CD4-positive, alpha-beta T cell (primary cell): ENCODE measurements at regions of chr16 and their contacts with region 1.

Region 1: GRCh38 chr16:88914750-88915368 is 48.4 kb upstream of the PABPN1L start:
- DNase-seq: no peak
- ATAC-seq: no peak
- H3K4me3 ChIP-seq: no peak overlapping the region
- H3K4me3 Mint-ChIP-seq: no peak overlapping the region
- H3K27ac ChIP-seq: no peak overlapping the region
- H3K27ac Mint-ChIP-seq: no peak overlapping the region
- H3K4me1 ChIP-seq: no peaks in the 10 kb centered on the region
- H3K4me1 Mint-ChIP-seq: no peaks in the 10 kb centered on the region
- H3K27me3 ChIP-seq: no peaks in the 10 kb centered on the region
- H3K27me3 Mint-ChIP-seq: peaks cover 5% of the 10 kb centered on the region
- CTCF ChIP-seq: no peak

Region 2: DNA sequence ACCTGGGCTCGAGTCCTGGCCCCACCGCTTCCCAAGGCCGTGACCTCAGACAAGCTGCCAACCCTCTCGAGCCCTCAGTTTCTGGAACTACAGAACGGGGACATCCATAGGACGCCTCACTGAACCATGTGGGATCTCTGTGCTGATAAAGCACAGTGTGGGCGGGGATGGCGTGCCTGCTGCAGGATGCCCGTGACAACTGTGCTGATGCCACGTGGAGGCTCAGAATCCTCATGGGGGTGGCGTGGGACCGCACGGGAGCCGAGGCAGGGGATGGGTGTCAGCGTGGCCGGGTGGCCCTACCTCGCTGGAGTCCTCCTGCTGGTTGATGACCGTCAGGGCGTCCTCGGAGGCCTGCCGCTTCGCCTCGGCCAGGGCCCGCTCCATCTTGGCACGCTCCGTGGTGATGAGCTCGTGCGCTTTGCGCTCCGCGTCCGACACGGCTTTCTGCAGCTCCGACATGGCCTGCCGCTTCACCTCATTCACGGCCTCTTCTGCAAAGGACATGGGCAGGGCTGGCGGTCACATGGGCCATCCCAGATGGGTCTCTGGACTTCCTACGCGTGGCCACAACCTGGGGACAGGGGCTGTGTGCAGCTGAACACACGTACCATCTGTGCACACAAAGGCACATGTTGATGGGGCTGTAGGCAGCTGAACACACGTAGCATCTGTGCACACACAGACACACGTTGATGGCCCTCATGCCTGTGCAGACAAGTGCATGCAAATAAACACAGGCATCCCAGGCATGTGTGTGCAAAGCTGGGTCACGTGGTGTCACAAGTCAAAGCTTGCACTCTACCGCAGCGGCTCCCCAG is 35.7 kb before region 1 on chr16:
- CTCF ChIA-PET with region 1: no interaction called
- POLR2A ChIA-PET with region 1: no interaction called
- intact Hi-C with region 1: loop called in 1 of 2 experiments (anchors 5 kb)
- DNase-seq: no peak
- ATAC-seq: no peak
- H3K4me3 ChIP-seq: no peak overlapping the region
- H3K4me3 Mint-ChIP-seq: no peak overlapping the region
- H3K27ac ChIP-seq: no peak overlapping the region
- H3K27ac Mint-ChIP-seq: no peak overlapping the region
- H3K4me1 ChIP-seq: peaks cover 9% of the 10 kb centered on the region
- H3K4me1 Mint-ChIP-seq: no peaks in the 10 kb centered on the region
- H3K27me3 ChIP-seq: no peaks in the 10 kb centered on the region
- H3K27me3 Mint-ChIP-seq: no peaks in the 10 kb centered on the region
- CTCF ChIP-seq: no peak

Region 3: GRCh38 chr16:88925101-88925887 is 10.4 kb after region 1 on chr16:
- CTCF ChIA-PET with region 1: no interaction called
- POLR2A ChIA-PET with region 1: no interaction called
- intact Hi-C with region 1: no loop called
- DNase-seq: peak in 4 of 14 experiments; percentile 17 to 50 (median 26)
- ATAC-seq: peak; percentile 65
- H3K4me3 ChIP-seq: no peak overlapping the region
- H3K4me3 Mint-ChIP-seq: no peak overlapping the region
- H3K27ac ChIP-seq: no peak overlapping the region
- H3K27ac Mint-ChIP-seq: no peak overlapping the region
- H3K4me1 ChIP-seq: peaks cover 10% of the 10 kb centered on the region
- H3K4me1 Mint-ChIP-seq: peaks cover 6% of the 10 kb centered on the region
- H3K27me3 ChIP-seq: peaks cover 0 to 3% of the 10 kb centered on the region in 2 experiments
- H3K27me3 Mint-ChIP-seq: no peaks in the 10 kb centered on the region
- CTCF ChIP-seq: no peak

Region 4: DNA sequence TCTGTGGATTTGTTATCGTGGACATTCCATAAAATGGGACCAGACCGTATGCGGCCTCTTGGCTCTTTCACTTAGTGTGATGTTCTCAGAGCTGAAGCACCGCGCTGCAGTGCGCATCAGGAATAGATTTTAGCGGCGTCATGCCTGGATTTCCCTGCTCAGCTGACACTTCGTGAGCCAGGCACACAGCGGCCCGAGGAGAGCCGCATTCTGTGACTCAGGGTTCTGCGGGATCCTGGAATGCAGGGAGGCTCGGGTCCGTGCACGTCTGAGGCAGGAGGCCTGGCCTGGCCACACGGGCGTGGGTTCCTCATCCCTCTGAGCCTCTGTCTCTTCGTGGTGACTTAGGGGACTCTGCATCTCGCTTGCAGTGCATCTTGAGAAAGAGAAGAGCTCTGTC is 48.7 kb after region 1 on chr16:
- CTCF ChIA-PET with region 1: no interaction called
- POLR2A ChIA-PET with region 1: no interaction called
- intact Hi-C with region 1: loop called in 1 of 2 experiments (anchors 5 kb)
- DNase-seq: no peak
- ATAC-seq: no peak
- H3K4me3 ChIP-seq: no peak overlapping the region
- H3K4me3 Mint-ChIP-seq: no peak overlapping the region
- H3K27ac ChIP-seq: no peak overlapping the region
- H3K27ac Mint-ChIP-seq: no peak overlapping the region
- H3K4me1 ChIP-seq: peaks cover 19% of the 10 kb centered on the region
- H3K4me1 Mint-ChIP-seq: peaks cover 10% of the 10 kb centered on the region
- H3K27me3 ChIP-seq: peaks cover 16% of the 10 kb centered on the region in 2 experiments
- H3K27me3 Mint-ChIP-seq: peaks cover 24% of the 10 kb centered on the region
- CTCF ChIP-seq: no peak